ENCODE measurements at regions of chr2 and their contacts with region 1.

Region 1: DNA sequence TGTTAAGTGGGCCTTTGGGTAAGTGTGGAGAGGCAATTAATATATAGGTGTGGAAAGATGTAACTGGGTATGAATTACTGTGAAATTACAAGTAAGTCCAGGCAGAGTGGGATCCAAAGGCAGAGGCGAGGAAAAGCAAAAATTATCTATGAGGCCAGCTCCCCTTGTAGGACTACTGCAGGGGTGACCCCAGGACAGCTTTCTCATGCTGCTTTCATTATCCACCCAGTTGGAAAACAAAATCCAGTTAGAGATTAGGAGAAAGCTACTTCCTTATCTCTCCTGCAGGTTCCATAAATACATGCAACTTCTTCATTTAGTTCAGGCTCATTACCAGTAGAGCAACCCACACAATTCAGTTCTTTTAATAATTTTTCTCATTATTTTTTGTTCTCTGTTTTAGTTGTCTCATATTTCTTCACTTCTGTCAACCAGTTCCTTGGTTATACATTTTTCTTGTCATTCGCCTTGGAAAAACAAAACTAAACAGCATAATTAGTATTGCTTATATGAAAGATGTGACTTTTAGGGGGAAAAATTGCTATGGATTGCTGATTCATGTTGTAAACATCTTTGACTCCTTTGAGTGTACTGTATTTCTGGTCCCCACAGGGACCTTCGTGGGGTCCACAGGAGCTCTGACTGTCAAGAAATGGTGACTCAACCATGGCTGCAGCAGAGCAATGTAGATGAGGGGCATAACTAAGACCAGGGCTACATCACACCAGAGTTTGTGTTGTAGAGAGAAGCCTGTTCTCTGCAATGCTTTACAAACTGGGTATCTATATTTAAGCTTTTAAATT is 110.4 kb upstream of the PARD3B start:
- DNase-seq: no peak
- H3K4me3 ChIP-seq: no peak overlapping the region
- CTCF ChIP-seq: no peak

Region 2: GRCh38 chr2:204339212-204339715 is 95.6 kb before region 1 on chr2:
- in situ Hi-C with region 1: no loop called
- DNase-seq: no peak
- H3K4me3 ChIP-seq: no peak overlapping the region
- CTCF ChIP-seq: no peak

Region 3: DNA sequence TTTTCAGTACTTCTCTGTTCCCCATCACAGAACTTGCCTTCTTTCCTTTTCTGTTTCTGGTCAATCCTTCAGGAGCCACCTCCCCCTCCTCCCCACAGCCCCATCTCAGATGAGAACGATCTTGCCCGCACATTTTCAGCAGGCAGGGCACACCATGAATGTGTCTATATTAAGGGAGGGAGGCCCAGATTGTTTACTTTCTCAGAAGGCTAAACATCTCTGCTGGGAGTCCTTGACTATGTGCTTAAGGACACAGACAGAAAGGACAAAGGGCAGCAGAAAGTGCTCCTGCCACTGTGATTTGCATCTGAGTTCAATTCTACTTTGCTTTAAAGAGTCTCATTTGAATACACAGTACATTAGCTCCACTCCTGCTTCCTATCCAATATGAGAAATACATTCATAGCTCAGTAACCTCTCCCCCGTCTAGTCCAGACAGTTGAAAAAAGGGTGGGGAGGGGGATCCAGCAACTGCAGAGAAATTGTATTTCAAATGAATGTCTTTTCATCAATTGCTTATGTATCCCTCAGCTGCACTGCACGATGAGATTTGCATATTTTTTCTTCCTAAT is 64.6 kb before region 1 on chr2:
- in situ Hi-C with region 1: loop called (anchors 10 kb)
- DNase-seq: no peak
- H3K4me3 ChIP-seq: no peak overlapping the region
- CTCF ChIP-seq: no peak

Region 4: GRCh38 chr2:204491528-204491927 is 56.7 kb after region 1 on chr2:
- in situ Hi-C with region 1: no loop called
- DNase-seq: peak; percentile 16
- H3K4me3 ChIP-seq: no peak overlapping the region
- CTCF ChIP-seq: no peak

Region 5: GRCh38 chr2:204505946-204506345 is 71.1 kb after region 1 on chr2:
- in situ Hi-C with region 1: no loop called
- DNase-seq: peak; percentile 62
- H3K4me3 ChIP-seq: no peak overlapping the region
- CTCF ChIP-seq: no peak